ENCODE measurements at regions of chr10 and their contacts with region 1.

Region 1: DNA sequence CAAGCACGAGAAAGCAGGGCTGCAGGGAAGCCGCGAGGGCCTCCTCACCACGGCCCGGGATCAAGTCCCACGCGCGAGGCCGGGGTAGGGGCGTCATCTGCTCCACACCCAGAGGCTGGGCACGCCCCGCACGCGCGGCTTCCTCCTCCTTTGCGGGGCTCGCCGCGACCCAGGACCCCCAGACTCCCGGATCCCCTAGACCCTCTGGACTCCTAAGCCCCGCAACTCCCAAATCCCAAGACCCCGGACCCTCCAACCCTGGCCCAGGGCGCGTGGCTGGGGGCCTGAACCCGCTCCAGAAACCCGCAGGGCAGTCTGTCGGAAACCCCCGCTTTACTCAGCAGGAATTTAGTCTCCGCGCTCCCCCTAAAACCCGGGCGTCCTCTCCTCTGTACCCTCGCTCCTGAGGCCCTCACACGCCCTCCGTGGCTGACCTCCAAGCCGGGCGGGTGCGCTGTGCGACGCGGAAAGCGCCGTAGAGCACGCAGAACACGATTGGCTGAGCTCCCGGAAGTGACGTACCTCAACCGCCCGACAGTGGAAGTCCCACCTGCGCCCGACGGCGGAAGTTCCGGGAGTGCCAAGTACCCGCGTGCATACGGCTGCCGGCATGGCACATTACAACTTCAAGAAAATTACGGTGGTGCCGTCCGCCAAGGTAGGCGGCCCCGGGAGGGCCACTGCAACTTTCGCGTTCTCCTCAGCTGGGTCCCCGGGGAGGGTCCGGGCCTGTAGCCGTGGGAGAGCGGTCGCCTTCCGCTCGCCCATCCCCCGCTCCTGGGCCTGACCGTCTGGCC is at the start of gene GTPBP4:
- DNase-seq: peak; percentile 88
- total RNA-seq, gene GTPBP4: 58.9 and 80.1 TPM in 2 replicates

Region 2: GRCh38 chr10:753530-753929 is 234.5 kb before region 1 on chr10:
- in situ Hi-C with region 1: loop called (anchors 10 kb)
- DNase-seq: no peak

Region 3: GRCh38 chr10:921471-922414 is 66.3 kb before region 1 on chr10:
- in situ Hi-C with region 1: no loop called
- DNase-seq: peak; percentile 50

Measured in Caki2 (cell line).